CD14-positive monocyte (primary cell): ENCODE measurements at regions of chr1 and their contacts with region 1.

Region 1: DNA sequence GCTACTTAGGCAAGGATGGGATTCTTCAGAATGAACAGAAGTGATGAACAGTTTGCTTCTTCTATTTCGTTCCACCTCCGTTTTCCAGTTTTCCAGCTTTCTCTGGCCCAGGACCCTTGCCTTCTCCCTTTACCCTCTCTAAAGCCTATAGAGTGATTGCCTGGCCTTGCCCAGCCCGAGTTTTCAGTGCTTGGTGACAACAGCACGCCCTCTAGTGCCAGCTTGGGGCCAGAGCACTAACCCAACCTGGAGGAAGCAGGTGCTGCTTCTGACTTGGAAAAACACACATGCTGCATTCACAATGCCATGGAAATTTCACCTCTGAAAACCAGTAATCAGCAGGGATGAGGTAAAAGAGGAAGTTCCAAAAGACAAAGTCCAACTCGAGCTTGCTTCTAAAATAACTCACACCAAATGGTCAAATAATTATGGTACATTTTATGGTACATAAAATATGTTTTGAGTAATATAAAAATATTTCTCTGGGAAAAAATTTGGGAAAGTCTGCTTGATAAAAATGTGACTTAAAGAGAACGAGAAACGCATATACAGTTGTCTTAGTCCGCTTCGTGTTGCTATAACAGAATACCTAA is 26.1 kb downstream of the UBE2T start:
- DNase-seq: peak; percentile 29 to 41 (median 37)
- H3K4me3 ChIP-seq: no peak overlapping the region
- H3K4me3 Mint-ChIP-seq: no peak overlapping the region
- H3K27ac ChIP-seq: no peak overlapping the region
- H3K27ac Mint-ChIP-seq: no peak overlapping the region
- H3K4me1 ChIP-seq: no peaks in the 10 kb centered on the region
- H3K4me1 Mint-ChIP-seq: no peaks in the 10 kb centered on the region
- H3K27me3 ChIP-seq: peaks cover 3 to 9% of the 10 kb centered on the region in 2 donors
- H3K27me3 Mint-ChIP-seq: peaks cover 18 to 32% (median 23%) of the 10 kb centered on the region in 3 donors
- CTCF ChIP-seq: peak; percentile 95

Region 2: GRCh38 chr1:202184750-202185460 is 130.8 kb before region 1 on chr1:
- intact Hi-C with region 1: loop called (anchors 5 to 10 kb)
- DNase-seq: peak; percentile 71 to 73 (median 72)
- H3K4me3 ChIP-seq: no peak overlapping the region
- H3K4me3 Mint-ChIP-seq: no peak overlapping the region
- H3K27ac ChIP-seq: no peak overlapping the region
- H3K27ac Mint-ChIP-seq: peak overlapping the region in 1 of 7 donors; percentile 61
- H3K4me1 ChIP-seq: no peaks in the 10 kb centered on the region
- H3K4me1 Mint-ChIP-seq: peaks cover 2% of the 10 kb centered on the region
- H3K27me3 ChIP-seq: no peaks in the 10 kb centered on the region
- H3K27me3 Mint-ChIP-seq: peaks cover 8 to 27% (median 18%) of the 10 kb centered on the region in 3 donors
- CTCF ChIP-seq: peak; percentile 93

Region 3: GRCh38 chr1:202192770-202193613 is 122.7 kb before region 1 on chr1:
- intact Hi-C with region 1: loop called (anchors 5 to 10 kb)
- DNase-seq: peak; percentile 13 to 41 (median 39)
- H3K4me3 ChIP-seq: no peak overlapping the region
- H3K4me3 Mint-ChIP-seq: peak overlapping the region in 1 of 2 donors; percentile 65
- H3K27ac ChIP-seq: no peak overlapping the region
- H3K27ac Mint-ChIP-seq: no peak overlapping the region
- H3K4me1 ChIP-seq: no peaks in the 10 kb centered on the region
- H3K4me1 Mint-ChIP-seq: peaks cover 2% of the 10 kb centered on the region
- H3K27me3 ChIP-seq: peaks cover 18 to 31% of the 10 kb centered on the region in 2 donors
- H3K27me3 Mint-ChIP-seq: peaks cover 41 to 53% (median 43%) of the 10 kb centered on the region in 3 donors
- CTCF ChIP-seq: peak; percentile 88